PC-3 (cell line): ENCODE measurements at regions of chr1 and their contacts with region 1.

Region 1: GRCh38 chr1:87953732-87954344 is 625.2 kb downstream of the LMO4 start:
- DNase-seq: peak; percentile 79
- ATAC-seq: peak; percentile 60
- H3K4me3 ChIP-seq: no peak overlapping the region
- H3K27ac ChIP-seq: no peak overlapping the region
- H3K4me1 ChIP-seq: peaks cover 28% of the 10 kb centered on the region
- H3K27me3 ChIP-seq: no peaks in the 10 kb centered on the region
- CTCF ChIP-seq: peak; percentile 92

Region 2: GRCh38 chr1:87131809-87132283 is 822.0 kb before region 1 on chr1:
- CTCF ChIA-PET with region 1: no interaction called
- POLR2A ChIA-PET with region 1: no interaction called
- intact Hi-C with region 1: loop called (anchors 10 kb)
- DNase-seq: peak; percentile 79
- ATAC-seq: peak; percentile 99
- H3K4me3 ChIP-seq: peak overlapping the region; percentile 64
- H3K27ac ChIP-seq: no peak overlapping the region
- H3K4me1 ChIP-seq: no peaks in the 10 kb centered on the region
- H3K27me3 ChIP-seq: no peaks in the 10 kb centered on the region
- CTCF ChIP-seq: peak; percentile 94

Region 3: DNA sequence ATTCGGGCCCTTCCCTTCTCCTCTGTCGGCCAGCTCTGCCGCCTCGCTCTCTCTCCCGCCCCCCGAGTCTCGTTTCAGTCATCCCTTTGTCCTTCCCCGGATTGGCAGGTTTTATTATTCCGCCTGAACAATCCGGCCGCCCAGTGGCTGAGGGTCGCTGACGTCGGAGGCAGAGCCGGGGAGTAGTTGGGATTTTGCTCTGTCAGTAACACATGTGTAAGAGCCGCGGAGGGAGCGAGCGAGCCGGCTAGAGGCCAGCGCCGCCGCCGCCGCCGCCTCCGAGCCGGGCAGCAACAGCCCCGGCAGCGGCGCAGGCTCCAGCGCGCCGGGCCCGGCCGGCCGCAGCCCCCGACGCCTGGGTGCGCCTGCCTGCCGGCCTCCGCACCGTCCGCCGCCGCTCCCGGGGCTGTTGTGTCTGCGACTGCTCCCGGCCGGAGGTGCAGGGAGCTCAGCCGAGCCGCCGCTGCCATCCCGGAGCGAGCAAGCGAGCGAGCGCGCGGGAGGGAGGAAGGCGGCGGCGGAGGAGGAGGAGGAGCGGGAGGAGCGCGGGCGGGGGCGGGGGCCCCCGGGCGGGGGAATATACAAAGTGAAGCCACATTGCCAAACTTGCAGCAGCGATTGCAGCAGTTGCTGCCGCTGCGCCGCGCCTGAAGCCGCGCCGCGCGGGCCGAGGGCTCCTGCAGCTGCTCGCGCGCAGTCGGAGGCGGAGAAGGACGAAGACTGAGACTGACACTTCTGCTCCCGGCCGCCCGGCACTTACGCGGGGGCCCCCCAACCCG is 625.4 kb before region 1 on chr1 and contains the start of gene LMO4:
- CTCF ChIA-PET with region 1: no interaction called
- POLR2A ChIA-PET with region 1: no interaction called
- intact Hi-C with region 1: loop called (anchors 1 kb)
- DNase-seq: peak; percentile 97
- ATAC-seq: peak; percentile 75
- H3K4me3 ChIP-seq: peak within 1 kb of the TSS; percentile 80
- H3K27ac ChIP-seq: peak within 1 kb of the TSS; percentile 43
- H3K4me1 ChIP-seq: peaks cover 25% of the 10 kb centered on the region
- H3K27me3 ChIP-seq: no peaks in the 10 kb centered on the region
- CTCF ChIP-seq: no peak
- total RNA-seq, gene LMO4: 35.7 and 41.5 TPM in 2 replicates

Region 4: GRCh38 chr1:87478231-87478630 is 475.6 kb before region 1 on chr1:
- CTCF ChIA-PET with region 1: no interaction called
- POLR2A ChIA-PET with region 1: no interaction called
- intact Hi-C with region 1: loop called (anchors 10 kb)
- DNase-seq: peak; percentile 28
- ATAC-seq: peak; percentile 65
- H3K4me3 ChIP-seq: no peak overlapping the region
- H3K27ac ChIP-seq: no peak overlapping the region
- H3K4me1 ChIP-seq: peaks cover 13% of the 10 kb centered on the region
- H3K27me3 ChIP-seq: no peaks in the 10 kb centered on the region
- CTCF ChIP-seq: peak; percentile 41; the same call in 1 of the 2 replicates

Region 5: DNA sequence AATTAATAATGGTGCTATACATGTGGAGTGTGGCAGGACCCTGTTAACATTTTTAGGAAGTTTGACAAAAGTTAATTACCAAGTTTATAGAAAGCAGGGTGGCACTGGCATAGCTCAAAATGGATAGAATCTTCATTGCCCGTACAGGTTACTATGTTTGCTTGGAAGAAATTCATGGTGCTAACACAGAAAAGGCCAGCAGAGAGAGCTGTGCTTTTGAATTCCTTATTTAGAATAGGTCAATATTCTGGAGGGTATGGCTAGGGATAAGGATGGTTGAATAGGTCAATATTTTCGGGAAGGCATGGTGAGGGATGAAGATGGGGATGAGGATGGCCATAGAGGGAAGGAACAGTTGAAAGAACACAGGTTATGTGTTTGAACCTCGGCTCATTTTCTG is 280.1 kb before region 1 on chr1:
- CTCF ChIA-PET with region 1: interaction called, 3 read pairs
- POLR2A ChIA-PET with region 1: interaction called, 3 read pairs
- intact Hi-C with region 1: loop called (anchors 10 kb)
- DNase-seq: peak; percentile 17
- ATAC-seq: no peak
- H3K4me3 ChIP-seq: no peak overlapping the region
- H3K27ac ChIP-seq: no peak overlapping the region
- H3K4me1 ChIP-seq: no peaks in the 10 kb centered on the region
- H3K27me3 ChIP-seq: no peaks in the 10 kb centered on the region
- CTCF ChIP-seq: peak; percentile 44

Region 6: DNA sequence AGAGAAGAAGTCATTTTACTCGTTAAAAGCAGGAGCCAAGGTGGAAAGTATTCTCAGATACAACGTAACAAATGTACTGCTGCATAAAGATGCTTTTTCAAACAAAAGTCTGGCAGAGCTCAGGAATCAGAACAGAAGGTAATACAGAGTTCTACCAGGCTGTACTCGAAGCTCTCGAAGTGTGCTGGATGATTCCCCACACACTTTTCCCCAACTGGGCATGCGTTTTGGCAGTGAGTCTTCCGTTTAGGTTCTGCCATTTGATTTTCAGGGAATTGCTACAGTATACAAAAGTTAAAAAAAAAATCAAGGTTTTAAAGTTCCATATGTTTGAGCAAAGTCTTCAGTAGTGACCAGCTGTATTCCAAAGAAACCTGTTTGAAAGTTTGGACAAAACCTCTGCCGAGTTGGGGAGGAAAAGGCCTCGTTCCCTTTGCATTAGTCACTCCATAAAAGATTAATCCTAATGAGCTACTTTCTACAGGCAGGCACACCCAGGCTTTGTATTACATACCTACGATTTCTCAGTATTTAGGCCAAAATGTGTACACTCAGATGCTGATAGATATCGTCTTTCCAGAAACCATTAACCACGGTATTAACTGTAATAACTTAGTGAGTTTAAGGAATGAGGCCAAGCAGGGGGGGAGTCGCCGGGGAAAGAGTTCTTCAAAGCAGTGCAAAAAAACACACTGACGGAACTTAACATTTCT is 148.0 kb before region 1 on chr1:
- CTCF ChIA-PET with region 1: no interaction called
- POLR2A ChIA-PET with region 1: no interaction called
- intact Hi-C with region 1: loop called (anchors 5 kb)
- DNase-seq: peak; percentile 91
- ATAC-seq: peak; percentile 96
- H3K4me3 ChIP-seq: peak overlapping the region; percentile 50
- H3K27ac ChIP-seq: peak overlapping the region; percentile 23
- H3K4me1 ChIP-seq: peaks cover 22% of the 10 kb centered on the region
- H3K27me3 ChIP-seq: no peaks in the 10 kb centered on the region
- CTCF ChIP-seq: no peak

Region 7: GRCh38 chr1:88276163-88276562 is 322.3 kb after region 1 on chr1:
- CTCF ChIA-PET with region 1: no interaction called
- POLR2A ChIA-PET with region 1: no interaction called
- intact Hi-C with region 1: no loop called
- DNase-seq: peak; percentile 79
- ATAC-seq: peak; percentile 90
- H3K4me3 ChIP-seq: no peak overlapping the region
- H3K27ac ChIP-seq: no peak overlapping the region
- H3K4me1 ChIP-seq: peaks cover 7% of the 10 kb centered on the region; the same call in 1 of the 2 replicates
- H3K27me3 ChIP-seq: no peaks in the 10 kb centered on the region
- CTCF ChIP-seq: no peak

Region 8: DNA sequence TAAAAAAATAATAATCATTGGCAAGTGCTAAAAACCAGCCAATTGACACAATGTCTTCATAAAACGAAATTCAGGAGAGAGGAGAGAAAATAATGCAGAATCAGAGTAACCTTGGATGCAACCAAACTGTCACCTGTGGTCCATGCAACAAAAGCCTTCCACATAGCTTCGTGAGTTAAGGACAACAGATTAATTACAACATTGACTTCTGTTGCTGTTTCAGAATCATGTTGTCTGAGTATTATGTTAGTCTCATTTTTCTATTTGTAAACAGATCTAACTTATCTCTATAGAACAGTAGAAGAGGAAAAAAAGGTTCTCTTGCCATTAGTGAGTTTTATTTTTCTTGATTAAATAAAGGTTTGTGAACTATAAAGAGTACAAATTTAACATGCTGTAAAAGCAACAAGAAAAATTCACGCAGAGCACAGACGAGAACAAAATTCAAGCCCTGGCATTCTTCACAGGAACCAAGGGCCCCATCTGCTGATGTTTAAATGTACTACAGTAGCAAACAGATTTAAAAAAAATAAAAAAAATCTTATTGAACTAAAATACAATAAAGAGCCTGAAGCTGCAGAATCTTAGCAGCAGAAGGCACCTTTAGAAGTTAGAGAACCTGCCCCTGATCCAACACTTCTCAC is 349.1 kb after region 1 on chr1:
- CTCF ChIA-PET with region 1: no interaction called
- POLR2A ChIA-PET with region 1: no interaction called
- intact Hi-C with region 1: loop called (anchors 10 kb)
- DNase-seq: peak; percentile 51
- ATAC-seq: peak; percentile 62; the same call in 1 of the 2 replicates
- H3K4me3 ChIP-seq: no peak overlapping the region
- H3K27ac ChIP-seq: no peak overlapping the region
- H3K4me1 ChIP-seq: no peaks in the 10 kb centered on the region
- H3K27me3 ChIP-seq: no peaks in the 10 kb centered on the region
- CTCF ChIP-seq: peak; percentile 65